AG04449 (cell line): ENCODE measurements at regions of chr16 and their contacts with region 1.

Region 1: GRCh38 chr16:87636072-87636684 is 33.9 kb downstream of the JPH3 start:
- DNase-seq: peak; percentile 7
- H3K4me3 ChIP-seq: no peak overlapping the region
- CTCF ChIP-seq: peak; percentile 85

Region 2: DNA sequence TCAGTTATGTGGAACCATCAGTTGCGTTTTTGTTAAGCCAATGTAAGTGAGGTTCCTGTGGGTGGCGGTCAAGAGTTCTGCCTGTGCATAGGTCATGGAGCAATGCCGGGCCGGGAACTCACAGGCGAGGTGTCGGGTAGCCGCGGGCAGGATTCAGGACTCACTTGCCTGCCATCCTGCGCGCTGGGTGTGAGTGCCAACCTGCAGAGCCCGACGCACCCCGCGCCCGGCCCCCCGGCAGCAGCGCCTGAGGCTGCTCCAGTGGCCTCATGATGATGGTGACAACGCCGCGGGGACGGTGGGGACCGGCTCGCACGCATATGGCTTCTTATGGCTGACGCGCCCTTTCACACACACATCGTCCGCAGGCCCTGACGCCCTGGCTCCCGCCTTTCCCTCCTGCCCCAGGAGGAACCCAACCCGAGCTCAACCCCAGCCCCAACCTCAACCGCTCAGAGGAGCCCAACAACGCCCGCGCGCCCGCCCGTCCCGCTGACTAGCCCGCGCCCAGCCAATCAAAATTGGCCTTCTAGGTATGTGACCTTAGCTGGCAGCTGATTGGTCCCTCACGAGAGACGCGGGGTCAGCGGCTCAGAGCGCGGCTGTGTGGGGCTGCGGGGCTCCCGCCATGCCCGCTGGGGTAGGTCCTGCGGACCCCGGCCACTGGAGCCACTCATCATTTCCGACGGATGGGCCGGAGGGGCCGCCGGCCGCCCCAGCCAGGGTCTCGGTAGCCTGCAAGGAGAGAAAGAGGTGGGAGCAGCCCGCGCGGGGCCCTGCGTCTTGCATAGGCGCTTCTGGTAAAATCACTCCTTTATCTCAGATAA is 319.0 kb before region 1 on chr16 and contains the start of gene C16orf95:
- CTCF ChIA-PET with region 1: interaction called, 10 read pairs
- POLR2A ChIA-PET with region 1: no interaction called
- DNase-seq: peak; percentile 66
- H3K4me3 ChIP-seq: peak within 1 kb of the TSS; percentile 93
- CTCF ChIP-seq: peak; percentile 65

Region 3: DNA sequence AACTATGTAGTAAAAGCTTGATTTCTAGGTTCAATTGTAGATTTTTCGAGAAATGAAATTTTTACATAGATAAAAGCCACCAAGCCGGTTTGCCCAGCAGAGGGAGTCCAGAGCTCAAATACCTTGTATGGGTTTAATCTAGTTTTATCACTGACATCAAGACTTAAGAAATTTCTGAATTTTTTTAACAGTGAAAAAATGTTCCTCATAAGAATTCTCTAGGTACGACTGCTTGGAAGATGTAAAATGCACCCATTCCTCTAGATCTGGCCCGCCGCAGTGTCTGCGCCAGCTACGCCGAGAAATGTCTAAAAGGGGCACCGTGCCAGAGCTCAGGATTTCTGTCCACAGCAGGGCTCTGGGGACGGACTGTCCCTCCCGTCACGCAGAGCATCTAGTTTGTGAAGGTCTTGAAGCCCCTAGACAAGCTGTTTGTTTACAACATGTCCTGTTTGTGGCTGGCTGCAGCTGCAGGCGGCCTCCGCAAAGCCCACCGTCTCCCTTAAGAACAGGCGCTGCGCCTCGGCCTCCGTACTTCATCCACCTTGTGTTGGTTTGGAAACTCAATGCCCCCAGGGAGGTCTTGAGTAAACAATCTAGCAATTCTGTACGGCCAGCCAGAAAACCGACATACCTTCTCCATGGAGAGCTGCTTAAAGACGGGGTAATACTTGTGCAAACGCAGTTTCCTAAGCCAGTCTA is 219.2 kb before region 1 on chr16:
- CTCF ChIA-PET with region 1: interaction called, 222 read pairs
- POLR2A ChIA-PET with region 1: no interaction called
- DNase-seq: no peak
- H3K4me3 ChIP-seq: no peak overlapping the region
- CTCF ChIP-seq: peak; percentile 46

Region 4: DNA sequence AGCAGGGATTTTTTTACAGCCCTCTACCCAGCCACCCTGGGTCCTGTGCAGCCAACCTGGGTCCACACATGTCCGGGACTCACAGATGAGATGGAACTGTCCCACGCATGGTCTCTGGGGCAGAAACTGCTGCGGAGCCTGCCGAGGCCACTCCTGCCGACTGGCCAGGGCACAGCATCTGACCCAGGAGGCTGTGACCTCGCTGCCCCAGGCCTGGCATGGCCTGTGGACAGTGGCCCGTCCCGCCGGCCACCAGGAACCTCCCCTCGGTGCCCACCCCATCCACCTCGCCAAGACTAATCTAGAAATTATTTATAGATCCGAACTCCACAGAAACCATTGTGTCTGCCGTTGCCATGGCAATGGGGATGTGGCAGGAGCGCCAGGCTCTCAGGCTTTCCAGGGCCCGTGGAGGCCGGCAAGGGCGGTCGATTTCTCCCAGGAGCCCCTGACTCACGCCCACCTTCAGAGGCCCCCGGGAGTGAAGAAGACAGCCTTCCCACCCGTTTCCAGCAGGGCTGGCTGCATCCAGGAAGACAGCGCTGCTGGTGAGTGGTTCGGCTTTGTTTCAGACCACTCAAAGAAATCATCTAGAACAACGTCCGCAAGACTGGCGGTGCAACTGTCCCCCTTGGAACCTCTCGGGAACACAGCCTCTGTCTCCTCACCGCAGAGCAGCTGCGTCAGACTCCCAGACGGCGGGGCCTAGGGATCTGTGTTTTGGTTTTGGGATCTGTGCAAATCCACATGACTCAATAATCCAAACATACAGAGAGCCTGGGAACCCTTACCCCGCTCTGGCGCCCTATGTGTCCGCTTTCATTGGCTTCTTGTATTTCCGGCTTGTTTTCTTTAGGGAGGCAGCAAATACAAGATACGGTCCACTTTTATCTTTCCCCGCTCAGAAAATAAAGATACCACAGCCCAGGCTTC is 95.0 kb before region 1 on chr16:
- CTCF ChIA-PET with region 1: interaction called, 20 read pairs
- POLR2A ChIA-PET with region 1: no interaction called
- DNase-seq: peak; percentile 14
- H3K4me3 ChIP-seq: no peak overlapping the region; the same call in 1 of the 2 replicates
- CTCF ChIP-seq: no peak

Region 5: GRCh38 chr16:87602821-87603683 is 33.1 kb before region 1 on chr16:
- CTCF ChIA-PET with region 1: interaction called, 15 read pairs
- POLR2A ChIA-PET with region 1: no interaction called
- DNase-seq: no peak
- H3K4me3 ChIP-seq: no peak overlapping the region
- CTCF ChIP-seq: no peak

Region 6: DNA sequence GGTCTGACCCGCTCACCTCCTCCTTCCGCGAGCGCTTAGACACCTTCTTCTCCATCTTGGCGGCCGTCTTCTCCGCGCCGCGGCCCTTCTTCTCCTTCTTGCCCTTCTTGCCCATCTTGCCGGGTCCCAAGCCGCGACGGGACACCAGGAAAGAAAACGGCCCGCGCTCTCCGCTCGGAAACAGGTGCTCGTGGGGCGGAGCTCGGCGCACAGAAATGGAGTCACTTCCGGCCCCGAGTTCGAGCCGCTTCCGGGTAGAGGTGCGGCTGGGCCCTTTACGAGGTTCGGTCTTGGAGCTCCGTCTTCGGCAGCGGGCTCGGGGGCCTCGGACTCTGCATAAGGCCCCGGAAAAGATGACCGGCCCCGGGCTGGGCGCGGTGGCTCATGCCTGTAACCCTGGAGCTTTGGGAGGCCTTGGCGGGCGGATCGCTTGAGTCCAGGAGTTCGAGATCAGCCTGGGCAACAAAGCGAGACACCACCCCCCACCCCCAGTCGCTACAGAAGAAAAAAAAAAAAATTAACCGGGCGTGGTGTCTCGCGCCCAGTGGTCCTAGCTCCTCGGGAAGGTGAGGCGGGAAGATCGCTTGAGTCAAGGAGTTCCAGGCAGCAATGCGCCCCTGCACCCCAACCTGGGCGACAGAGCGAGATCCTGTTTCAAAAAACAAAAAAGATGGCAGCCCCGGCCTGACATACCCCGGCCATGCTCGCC is 129.8 kb after region 1 on chr16 and contains the start of gene KLHDC4:
- CTCF ChIA-PET with region 1: interaction called, 16 read pairs
- POLR2A ChIA-PET with region 1: no interaction called
- DNase-seq: no peak
- H3K4me3 ChIP-seq: peak within 1 kb of the TSS; percentile 82
- CTCF ChIP-seq: no peak